Left cardiac atrium (tissue), 4 donors: ENCODE measurements at regions of chr1 and their contacts with region 1.

Region 1: DNA sequence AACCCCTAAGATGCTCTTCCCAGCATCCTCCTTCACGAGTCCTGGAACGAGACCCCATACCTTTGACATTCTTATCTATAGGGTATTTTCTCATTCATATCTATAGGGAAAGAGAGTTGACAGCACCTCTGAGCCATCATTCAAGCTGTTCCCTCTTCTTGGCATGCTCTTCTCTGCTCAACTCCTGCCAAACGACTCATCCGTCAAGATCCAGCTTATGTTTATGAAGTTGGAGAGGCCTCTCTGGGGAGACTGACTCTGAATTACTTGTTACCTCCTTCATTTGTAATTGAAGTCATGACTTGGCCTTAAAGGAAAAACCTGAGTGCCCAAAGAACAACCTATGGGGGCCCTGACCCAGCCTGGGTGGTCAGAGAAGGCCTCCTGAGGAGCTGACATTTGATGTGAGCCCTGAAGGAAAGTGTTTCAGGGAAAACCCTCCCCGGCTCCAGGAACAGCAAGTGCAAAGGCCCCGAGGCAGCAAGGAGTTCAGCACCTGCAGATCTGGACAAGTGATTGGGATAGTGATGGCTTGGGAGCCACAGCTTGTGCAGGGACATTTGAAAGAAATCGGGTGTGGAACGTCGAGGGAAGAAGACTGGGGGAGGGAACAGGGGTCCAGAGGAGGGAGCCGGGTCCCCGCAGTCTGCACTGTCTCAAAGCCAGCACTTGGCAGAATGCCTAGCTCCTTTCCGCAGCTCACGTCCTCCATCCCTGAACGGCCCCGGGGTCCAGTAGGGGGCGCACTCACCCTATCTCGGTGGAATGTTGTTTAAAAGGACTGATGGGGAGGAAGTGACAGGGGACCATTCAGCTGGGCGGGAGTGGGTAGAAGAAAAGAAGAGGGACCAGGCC is 14.0 kb upstream of the CDA start:
- DNase-seq: peak; percentile 91
- ATAC-seq: peak; percentile 78 to 96

Region 2: GRCh38 chr1:20521960-20522861 is 52.7 kb before region 1 on chr1:
- intact Hi-C with region 1: no loop called
- DNase-seq: peak; percentile 71
- ATAC-seq: peak; percentile 76 to 79

Region 3: DNA sequence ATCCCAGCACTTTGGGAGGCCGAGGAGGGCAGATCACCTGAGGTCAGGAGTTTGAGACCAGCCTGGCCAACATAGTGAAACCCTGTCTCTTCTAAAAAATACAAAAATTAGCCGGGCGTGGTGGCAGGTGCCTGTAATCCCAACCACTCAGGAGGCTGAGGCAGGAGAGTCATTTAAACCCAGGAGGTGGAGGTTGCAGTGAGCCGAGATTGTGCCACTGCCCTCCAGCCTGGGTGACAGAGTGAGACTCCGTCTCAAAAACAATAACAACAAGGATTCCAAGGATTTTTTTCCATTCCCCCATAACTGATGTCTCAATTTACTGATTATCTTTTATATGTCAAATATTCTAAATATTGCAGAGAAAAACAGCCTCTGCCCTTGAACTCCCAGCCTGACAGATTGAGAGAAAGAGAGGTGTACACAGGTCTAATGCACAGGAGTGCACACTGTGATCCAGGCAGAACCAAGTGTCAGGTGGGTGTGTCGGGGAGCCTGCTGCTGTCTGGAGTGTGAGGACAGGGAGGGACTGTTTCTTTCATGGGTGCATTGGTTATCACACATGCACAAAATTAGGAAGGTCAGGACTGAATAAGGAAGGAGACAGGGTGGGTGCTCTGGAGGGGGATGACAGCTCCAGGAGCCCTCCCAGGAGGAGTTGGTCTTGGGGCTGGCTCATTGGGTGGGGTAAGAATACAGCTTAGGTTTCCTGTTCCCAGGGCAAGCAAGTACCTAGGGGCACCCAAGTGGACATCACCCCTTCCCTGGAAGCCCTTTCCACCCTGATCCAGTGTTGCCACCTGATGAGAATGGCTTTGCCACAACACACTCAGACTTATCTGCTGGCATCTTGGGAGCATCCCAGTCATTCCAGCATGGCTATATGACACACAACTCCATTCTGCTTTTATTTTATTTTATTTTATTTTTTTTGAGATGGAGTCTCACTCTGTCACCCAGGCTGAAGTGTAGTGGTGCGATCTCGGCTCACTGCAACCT is 45.0 kb after region 1 on chr1:
- intact Hi-C with region 1: no loop called
- DNase-seq: no peak
- ATAC-seq: no peak

Region 4: GRCh38 chr1:20633190-20634064 is 58.5 kb after region 1 on chr1 and contains the start of gene PINK1:
- intact Hi-C with region 1: loop called in 1 of 2 experiments (anchors 5 kb)
- DNase-seq: peak; percentile 83
- ATAC-seq: peak; percentile 95 to 96
- total RNA-seq, gene PINK1: 126 to 149 TPM